Prostate gland (tissue), 2 donors: ENCODE measurements at regions of chr3 and their contacts with region 1.

Region 1: DNA sequence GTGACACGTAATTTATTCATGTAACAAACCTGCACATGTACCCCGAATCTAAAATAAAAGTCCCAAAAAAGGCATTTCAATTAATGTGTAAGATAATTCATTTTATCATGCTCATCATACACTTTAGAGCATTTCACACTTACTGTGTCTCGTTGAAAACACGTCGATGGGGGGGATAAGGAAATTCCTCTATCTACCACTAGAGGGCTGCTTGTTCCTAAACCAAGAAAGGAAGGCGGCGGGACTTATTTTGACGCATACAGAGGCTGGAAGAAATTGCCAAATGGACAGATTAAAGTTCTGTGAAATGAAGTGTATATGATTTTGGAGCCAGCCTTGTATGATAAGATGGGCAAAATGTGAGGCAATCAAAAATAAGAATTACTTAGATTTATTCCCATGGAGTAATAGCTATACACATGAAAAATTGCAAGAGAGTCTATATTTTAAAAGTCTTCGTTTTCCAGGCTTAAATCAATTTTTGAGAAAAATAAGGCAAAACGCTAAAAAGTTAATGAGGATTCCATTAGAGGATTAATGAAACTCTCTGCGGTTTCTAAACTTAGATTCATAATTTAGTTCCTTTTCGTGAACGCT is 346.8 kb downstream of the CNTN3 start:
- DNase-seq: peak; percentile 36
- H3K4me3 ChIP-seq: no peak overlapping the region
- H3K27ac ChIP-seq: no peak overlapping the region
- H3K4me1 ChIP-seq: no peaks in the 10 kb centered on the region
- H3K27me3 ChIP-seq: no peaks in the 10 kb centered on the region
- CTCF ChIP-seq: peak; percentile 53 to 69 (median 58)
- POLR2A ChIP-seq: no peak

Region 2: DNA sequence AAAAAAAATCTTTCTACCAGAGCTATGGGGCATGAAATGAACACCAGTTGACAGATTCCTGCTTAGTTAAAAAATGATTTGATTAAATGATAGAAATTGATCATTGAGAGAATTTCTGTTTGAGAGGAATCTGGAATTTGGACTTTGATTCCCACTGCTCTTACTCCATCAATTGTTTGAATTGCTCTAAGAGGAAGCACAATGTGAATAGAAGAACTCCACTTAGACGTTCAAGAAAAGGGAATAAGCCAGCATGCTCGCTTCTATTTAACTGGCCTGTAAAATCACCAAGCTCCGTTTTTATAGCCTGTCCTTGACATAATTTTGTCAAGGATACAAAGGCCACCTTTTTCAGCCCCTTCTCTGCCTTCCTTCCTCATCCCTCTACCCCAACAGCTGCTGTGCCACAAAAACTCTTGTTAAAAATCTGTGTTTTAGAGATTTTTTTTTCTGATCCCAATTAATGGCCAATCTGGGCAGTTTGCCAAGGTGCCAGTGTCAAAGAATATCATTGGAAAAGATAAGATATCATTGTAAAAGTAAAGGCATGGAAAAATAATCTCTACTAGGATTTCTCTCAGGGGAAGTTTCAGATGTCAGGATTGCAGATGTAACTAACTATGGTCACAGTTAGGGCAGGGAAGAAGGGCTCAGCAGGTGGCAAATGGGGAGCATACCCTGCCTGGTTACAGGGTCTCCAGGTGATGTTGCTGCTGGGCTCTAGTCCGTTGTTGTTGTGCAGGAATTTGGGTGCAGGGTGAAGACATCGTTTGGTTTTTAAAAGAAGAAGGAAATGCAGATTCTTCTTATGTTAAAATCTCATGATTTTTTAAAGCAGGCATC is 341.1 kb before region 1 on chr3:
- intact Hi-C with region 1: no loop called
- DNase-seq: no peak
- H3K4me3 ChIP-seq: no peak overlapping the region
- H3K27ac ChIP-seq: no peak overlapping the region
- H3K4me1 ChIP-seq: no peaks in the 10 kb centered on the region
- H3K27me3 ChIP-seq: no peaks in the 10 kb centered on the region
- CTCF ChIP-seq: no peak
- POLR2A ChIP-seq: no peak

Region 3: GRCh38 chr3:74200952-74201351 is 66.7 kb before region 1 on chr3:
- intact Hi-C with region 1: no loop called
- DNase-seq: no peak
- H3K4me3 ChIP-seq: no peak overlapping the region
- H3K27ac ChIP-seq: no peak overlapping the region
- H3K4me1 ChIP-seq: no peaks in the 10 kb centered on the region
- H3K27me3 ChIP-seq: no peaks in the 10 kb centered on the region
- CTCF ChIP-seq: no peak
- POLR2A ChIP-seq: no peak

Region 4: DNA sequence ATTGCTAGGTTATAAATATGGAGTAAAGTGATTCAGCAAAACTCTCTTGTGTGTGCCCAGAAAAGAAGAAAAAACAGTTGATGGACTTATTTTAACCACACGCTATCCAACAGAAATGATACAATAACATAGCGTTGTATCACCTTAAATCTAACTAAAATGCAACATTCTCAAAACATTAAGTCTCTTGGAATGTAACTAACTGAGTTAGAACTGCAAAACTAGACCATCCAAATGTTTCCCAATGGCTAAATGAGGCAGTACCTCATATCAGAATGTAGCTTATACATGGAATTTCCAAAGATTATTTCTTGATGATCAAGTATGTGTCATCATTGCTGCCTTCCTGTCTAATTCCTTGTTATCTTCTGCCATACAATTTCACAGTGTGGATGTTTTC is 158.9 kb after region 1 on chr3:
- intact Hi-C with region 1: no loop called
- DNase-seq: no peak
- H3K4me3 ChIP-seq: no peak overlapping the region
- H3K27ac ChIP-seq: no peak overlapping the region
- H3K4me1 ChIP-seq: no peaks in the 10 kb centered on the region
- H3K27me3 ChIP-seq: no peaks in the 10 kb centered on the region
- CTCF ChIP-seq: no peak
- POLR2A ChIP-seq: no peak

Region 5: GRCh38 chr3:74630602-74631001 is 362.9 kb after region 1 on chr3:
- intact Hi-C with region 1: loop called (anchors 2 kb)
- DNase-seq: no peak
- H3K4me3 ChIP-seq: no peak overlapping the region
- H3K27ac ChIP-seq: no peak overlapping the region
- H3K4me1 ChIP-seq: no peaks in the 10 kb centered on the region
- H3K27me3 ChIP-seq: no peaks in the 10 kb centered on the region
- CTCF ChIP-seq: peak in 3 of 4 experiments; percentile 36 to 57 (median 42)
- POLR2A ChIP-seq: no peak

Region 6: GRCh38 chr3:74920721-74921350 is 653.1 kb after region 1 on chr3:
- intact Hi-C with region 1: no loop called
- DNase-seq: no peak
- H3K4me3 ChIP-seq: no peak overlapping the region
- H3K27ac ChIP-seq: no peak overlapping the region
- H3K4me1 ChIP-seq: no peaks in the 10 kb centered on the region
- H3K27me3 ChIP-seq: no peaks in the 10 kb centered on the region
- CTCF ChIP-seq: no peak
- POLR2A ChIP-seq: no peak

Region 7: DNA sequence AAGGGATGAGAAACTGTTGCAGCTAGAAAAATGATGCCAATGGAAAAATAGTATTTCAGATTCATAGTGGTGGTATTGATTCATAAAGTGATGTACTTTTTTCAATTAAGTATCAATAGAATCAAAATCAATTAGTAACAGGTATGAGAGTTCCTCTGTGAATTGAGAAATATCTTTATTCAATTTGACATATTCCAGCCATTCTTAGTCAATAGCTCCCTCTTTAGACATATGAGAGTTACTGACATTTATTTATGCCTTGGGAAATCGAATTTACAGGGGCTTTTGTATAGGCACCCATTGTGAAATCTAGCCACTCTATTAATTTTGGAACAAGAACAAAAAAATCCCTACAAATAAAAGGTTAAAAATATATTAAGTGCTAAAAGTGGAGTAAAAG is 733.6 kb after region 1 on chr3:
- intact Hi-C with region 1: loop called (anchors 10 kb)
- DNase-seq: no peak
- H3K4me3 ChIP-seq: no peak overlapping the region
- H3K27ac ChIP-seq: no peak overlapping the region
- H3K4me1 ChIP-seq: no peaks in the 10 kb centered on the region
- H3K27me3 ChIP-seq: no peaks in the 10 kb centered on the region
- CTCF ChIP-seq: peak in 2 of 4 experiments; percentile 27 to 41
- POLR2A ChIP-seq: no peak